Mammary epithelial cell (primary cell): ENCODE measurements at regions of chr2 and their contacts with region 1.

Region 1: DNA sequence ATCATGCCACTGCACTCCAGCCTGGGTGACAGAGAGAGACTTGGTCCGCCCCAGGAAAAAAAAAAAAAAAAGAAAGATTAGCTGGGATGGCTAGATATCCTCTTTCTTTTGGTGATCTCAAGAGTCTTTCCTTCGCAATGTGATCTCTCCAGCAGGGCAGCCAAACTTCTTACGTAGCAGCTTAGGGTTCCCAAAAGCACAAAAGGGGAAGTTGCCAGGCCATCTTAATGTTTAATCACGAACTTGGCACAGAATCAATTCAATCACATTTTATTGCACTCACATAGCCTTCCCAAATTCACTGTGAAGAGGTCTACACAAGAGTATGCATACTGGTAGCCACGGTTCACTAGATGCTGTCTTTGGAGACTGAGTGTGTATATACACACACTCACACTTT is 53.1 kb downstream of the VIL1 start:
- DNase-seq: no peak
- H3K4me3 ChIP-seq: no peak overlapping the region
- H3K27ac ChIP-seq: no peak overlapping the region
- H3K4me1 ChIP-seq: no peaks in the 10 kb centered on the region
- H3K27me3 ChIP-seq: no peaks in the 10 kb centered on the region
- CTCF ChIP-seq: no peak

Region 2: DNA sequence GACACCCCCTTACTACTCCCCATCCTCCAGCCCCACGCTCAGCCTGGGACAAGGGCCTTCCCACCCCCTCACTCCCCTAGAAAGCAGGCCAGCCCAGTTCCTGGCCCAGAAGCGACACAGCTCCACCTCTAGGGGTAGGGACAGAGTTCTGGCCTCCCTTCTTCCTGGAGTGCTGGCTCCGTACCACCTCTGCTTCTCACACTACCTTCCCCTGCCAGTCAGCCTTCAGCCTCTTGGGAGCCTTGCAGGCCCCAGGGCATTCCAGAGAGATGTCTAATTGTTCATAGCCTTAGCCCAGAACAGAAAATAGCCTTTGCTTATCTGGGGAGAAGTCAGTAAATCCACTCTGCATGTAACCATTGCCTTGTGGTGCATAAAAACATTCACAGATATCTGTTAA is 128.4 kb before region 1 on chr2:
- CTCF ChIA-PET with region 1: no interaction called
- dilution Hi-C with region 1: no loop called
- in situ Hi-C with region 1: no loop called
- intact Hi-C with region 1: no loop called
- DNase-seq: no peak
- H3K4me3 ChIP-seq: no peak overlapping the region
- H3K27ac ChIP-seq: no peak overlapping the region
- H3K4me1 ChIP-seq: no peaks in the 10 kb centered on the region
- H3K27me3 ChIP-seq: no peaks in the 10 kb centered on the region
- CTCF ChIP-seq: no peak

Region 3: DNA sequence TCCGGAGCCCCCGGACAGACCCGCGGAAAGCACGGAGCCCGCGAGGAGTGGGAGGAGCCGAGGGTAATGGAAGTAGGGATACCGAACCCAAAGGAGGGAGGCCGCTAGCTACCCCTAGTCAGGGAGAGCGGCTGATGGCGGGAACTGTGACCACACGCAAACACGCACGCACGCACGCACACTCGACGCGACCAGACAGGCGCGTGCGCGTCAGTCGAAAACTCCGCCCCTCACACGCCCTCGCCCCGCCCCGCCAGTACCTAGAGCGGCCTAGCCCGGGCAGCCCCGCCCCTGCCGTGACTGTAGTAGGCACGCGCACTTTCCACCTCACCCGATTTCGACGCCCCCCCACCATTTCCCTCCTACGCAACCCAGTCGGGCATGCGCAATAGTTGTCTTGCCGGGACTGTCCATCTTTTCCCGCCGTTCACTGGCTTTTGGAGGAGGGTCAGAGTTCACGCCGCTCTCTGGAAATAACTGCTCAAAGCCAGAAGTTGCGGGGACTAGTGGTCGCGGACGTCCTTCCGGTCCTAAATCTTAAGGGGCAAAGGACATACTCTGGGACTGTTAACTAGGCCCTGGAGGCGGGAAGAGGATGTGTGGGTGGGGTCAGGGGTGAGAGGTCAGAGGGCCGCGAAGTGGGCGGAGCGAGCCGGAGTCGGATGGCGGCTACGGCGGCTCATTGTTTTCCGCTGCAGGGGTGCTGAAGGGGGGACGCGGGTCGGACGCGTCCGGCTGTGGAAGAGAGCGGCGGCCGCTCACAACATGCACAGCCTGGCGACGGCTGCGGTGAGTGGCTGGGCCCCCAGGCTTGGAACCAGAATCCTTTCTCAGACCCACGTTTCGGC is 96.4 kb after region 1 on chr2 and contains the starts of genes CNOT9 and USP37:
- CTCF ChIA-PET with region 1: no interaction called
- dilution Hi-C with region 1: loop called (anchors 5 kb)
- in situ Hi-C with region 1: no loop called
- intact Hi-C with region 1: no loop called
- DNase-seq: peak; percentile 98
- H3K4me3 ChIP-seq: peak within 1 kb of the TSS; percentile 62 to 98 (median 94)
- H3K27ac ChIP-seq: peak within 1 kb of the TSS; percentile 96
- H3K4me1 ChIP-seq: peaks cover 26% of the 10 kb centered on the region
- H3K27me3 ChIP-seq: no peaks in the 10 kb centered on the region
- CTCF ChIP-seq: no peak
- total RNA-seq, gene CNOT9: 39.8 to 53.3 TPM
- total RNA-seq, gene USP37: 10.7 to 14.6 TPM

Region 4: DNA sequence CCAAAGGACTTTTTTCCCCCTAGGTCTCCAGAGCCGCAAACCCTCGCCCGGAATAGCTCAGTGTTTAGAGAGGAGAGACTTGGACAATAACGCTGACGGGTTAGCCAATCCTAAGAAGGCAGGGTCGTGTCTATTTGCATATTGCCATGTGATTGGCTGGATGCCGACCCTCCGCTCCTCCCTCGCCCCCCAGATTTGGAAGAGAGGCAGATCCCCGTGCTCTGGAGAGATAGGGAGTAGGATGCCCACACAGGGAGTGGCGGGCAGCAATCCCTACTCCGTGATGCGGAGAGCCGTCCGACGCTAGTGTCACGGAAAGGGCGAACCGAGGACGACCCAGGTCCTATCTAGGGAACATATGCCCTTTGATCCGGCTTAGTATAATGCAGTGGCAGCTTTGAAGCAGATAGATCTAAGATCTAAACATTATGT is 389.0 kb after region 1 on chr2:
- CTCF ChIA-PET with region 1: interaction called, 11 read pairs
- dilution Hi-C with region 1: no loop called
- in situ Hi-C with region 1: no loop called
- intact Hi-C with region 1: no loop called
- DNase-seq: peak; percentile 55
- H3K4me3 ChIP-seq: no peak overlapping the region
- H3K27ac ChIP-seq: no peak overlapping the region
- H3K4me1 ChIP-seq: peaks cover 8% of the 10 kb centered on the region
- H3K27me3 ChIP-seq: peaks cover 26% of the 10 kb centered on the region
- CTCF ChIP-seq: no peak